MCF 10A (cell line): ENCODE measurements at regions of chr11 and their contacts with region 1.

Region 1: DNA sequence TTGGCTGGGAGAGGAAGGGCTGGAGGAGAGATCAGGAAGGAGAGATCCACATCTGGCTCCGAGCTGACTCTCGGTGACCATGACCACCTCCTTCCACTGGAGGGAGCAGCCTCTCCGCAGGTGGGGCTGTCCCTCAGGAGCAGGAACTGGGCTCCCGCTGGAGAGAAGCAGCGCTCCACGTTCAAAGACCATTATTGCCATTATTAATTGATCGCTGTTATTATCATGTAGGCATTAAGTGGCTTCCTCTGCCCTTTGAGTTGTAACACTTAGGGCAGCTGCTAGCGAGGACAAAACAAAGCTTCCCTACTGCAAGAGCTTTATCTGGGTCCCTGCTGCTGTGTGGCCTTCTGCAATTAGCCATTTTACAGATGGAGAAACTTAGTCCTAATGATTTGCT is 251.9 kb downstream of the ST3GAL4 start:
- DNase-seq: peak; percentile 65
- H3K4me3 Mint-ChIP-seq: peak overlapping the region; percentile 5
- H3K27ac Mint-ChIP-seq: no peak overlapping the region
- H3K4me1 Mint-ChIP-seq: peaks cover 5% of the 10 kb centered on the region
- H3K27me3 Mint-ChIP-seq: peaks cover 37% of the 10 kb centered on the region
- CTCF ChIP-seq: peak; percentile 93

Region 2: DNA sequence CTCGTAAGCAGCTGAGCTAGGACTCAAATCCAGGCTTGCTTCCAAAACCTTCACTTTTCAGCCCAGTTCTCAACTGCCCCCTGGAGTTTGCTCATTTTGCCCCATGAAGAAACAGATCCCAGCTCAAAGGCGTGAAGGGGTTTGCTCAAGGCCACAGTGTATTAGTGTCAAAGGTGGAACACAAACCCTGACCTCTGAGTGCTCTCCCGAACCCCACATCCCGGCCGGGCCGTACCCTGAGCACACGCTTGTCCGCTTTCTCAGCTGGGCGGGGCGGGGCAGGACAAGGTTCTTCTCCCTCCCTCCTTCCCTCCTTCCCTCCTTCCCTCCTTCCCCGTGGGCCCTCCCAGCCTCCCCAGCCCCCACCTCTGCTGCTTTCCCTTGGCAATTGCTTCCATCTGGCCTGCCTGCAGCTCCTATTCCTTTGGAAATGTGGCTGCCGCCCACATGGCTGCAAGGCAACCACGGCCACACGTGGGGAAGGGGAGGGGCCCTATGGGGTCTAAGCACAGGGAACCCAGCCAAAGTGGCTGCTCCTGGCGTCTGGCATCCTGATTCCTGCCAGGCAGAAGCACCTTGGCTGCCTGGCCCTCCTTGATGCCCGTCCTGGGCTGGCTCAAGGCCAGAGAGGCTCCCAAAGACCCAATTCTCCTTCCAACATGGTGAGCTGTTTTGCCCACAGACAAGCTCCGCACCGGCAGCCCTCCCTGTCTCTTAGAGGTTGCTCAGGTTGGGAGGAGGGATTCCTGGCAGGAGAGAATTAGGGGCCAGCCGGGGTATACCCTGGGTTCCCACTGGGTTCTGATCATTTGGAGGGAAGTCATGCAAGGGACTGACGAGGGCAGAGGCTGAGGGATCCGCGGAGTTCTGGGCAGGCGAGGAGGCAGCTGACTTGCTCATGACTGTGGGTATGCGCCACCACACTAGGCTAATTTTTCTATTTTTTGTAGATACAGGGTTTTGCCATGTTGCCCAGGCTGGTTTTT is 247.7 kb before region 1 on chr11:
- CTCF ChIA-PET with region 1: no interaction called
- POLR2A ChIA-PET with region 1: no interaction called
- intact Hi-C with region 1: no loop called
- DNase-seq: peak; percentile 43
- H3K4me3 Mint-ChIP-seq: no peak overlapping the region
- H3K27ac Mint-ChIP-seq: peak overlapping the region; percentile 51
- H3K4me1 Mint-ChIP-seq: peaks cover 21% of the 10 kb centered on the region
- H3K27me3 Mint-ChIP-seq: no peaks in the 10 kb centered on the region
- CTCF ChIP-seq: no peak

Region 3: DNA sequence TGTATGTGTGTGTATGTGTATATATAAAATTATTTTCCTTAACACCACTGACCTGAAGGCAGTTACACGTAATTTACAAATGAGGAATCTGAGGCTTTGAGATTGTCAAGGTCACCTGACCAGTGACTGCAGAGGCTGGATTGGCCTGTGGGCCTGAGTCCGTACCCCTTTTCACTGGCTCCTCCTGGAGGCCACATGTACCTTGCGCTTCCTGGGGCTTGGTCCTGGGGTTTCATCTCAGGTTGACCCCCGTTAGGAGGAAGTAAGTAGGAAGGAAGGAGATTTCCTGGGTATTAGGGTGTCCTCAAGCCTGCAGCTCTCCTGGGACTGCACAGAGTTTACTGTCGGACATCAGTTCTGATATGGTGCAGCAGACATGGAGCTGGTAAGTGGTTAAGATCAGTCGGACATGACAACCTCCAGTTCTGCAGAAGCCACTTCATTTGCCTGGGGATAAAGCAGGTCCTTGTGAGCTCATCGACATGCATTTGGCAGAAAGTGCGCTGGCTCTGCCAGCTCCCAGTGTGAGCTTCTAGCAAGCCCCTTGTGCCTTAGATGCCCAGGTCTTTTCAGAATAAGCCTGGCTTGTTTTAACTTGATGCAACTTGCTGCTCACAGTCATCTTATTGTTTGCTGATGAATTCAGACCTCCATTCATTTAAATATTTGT is 215.3 kb before region 1 on chr11:
- CTCF ChIA-PET with region 1: no interaction called
- POLR2A ChIA-PET with region 1: no interaction called
- intact Hi-C with region 1: no loop called
- DNase-seq: peak; percentile 35
- H3K4me3 Mint-ChIP-seq: no peak overlapping the region
- H3K27ac Mint-ChIP-seq: peak overlapping the region; percentile 83
- H3K4me1 Mint-ChIP-seq: peaks cover 30% of the 10 kb centered on the region
- H3K27me3 Mint-ChIP-seq: no peaks in the 10 kb centered on the region
- CTCF ChIP-seq: no peak

Region 4: GRCh38 chr11:126585781-126586491 is 21.4 kb before region 1 on chr11:
- CTCF ChIA-PET with region 1: interaction called, 44 read pairs
- POLR2A ChIA-PET with region 1: no interaction called
- intact Hi-C with region 1: no loop called
- DNase-seq: peak; percentile 97
- H3K4me3 Mint-ChIP-seq: no peak overlapping the region
- H3K27ac Mint-ChIP-seq: no peak overlapping the region
- H3K4me1 Mint-ChIP-seq: no peaks in the 10 kb centered on the region
- H3K27me3 Mint-ChIP-seq: no peaks in the 10 kb centered on the region
- CTCF ChIP-seq: no peak

Region 5: DNA sequence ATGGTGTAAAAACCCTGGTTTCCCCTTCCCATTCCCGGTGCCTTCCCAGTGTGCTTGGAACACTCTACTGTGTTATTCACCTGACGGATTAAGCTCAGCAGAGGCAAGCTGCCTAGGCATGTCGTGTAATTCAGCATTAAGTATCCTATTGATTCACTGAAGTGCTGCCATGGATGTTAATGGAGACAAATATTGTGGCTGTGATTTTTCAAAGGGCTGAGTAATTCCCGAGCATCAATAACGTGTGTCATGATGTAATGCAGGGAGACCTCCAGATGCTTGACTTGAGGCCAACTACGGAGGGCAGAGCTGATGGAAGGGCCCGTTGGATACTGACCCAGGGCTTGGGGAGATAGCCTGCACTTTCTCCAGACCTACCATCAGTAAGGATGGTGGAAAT is 17.1 kb after region 1 on chr11:
- CTCF ChIA-PET with region 1: interaction called, 10 read pairs
- POLR2A ChIA-PET with region 1: no interaction called
- intact Hi-C with region 1: no loop called
- DNase-seq: no peak
- H3K4me3 Mint-ChIP-seq: no peak overlapping the region
- H3K27ac Mint-ChIP-seq: no peak overlapping the region
- H3K4me1 Mint-ChIP-seq: no peaks in the 10 kb centered on the region
- H3K27me3 Mint-ChIP-seq: peaks cover 11% of the 10 kb centered on the region
- CTCF ChIP-seq: no peak

Region 6: DNA sequence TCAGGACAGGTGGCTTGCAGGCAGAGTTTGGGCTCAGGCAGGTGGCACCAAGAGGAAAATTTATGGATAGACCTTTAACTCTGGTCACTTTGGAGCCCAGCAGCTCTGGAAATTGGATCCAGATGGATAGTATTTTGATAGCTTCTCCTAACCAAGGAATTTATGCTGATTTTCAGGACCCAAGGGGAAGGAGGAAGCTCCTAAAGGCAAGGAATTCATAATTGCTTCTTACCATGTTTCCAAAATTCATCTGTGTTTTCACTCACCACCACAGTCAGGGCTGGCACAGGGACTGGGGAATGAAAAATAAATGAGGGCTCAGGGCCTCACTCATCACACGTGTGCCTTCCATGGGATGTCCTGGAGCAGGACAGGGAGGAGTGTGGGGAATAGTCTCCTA is 65.9 kb after region 1 on chr11:
- CTCF ChIA-PET with region 1: interaction called, 3 read pairs
- POLR2A ChIA-PET with region 1: no interaction called
- intact Hi-C with region 1: loop called (anchors 10 kb)
- DNase-seq: no peak
- H3K4me3 Mint-ChIP-seq: no peak overlapping the region
- H3K27ac Mint-ChIP-seq: no peak overlapping the region
- H3K4me1 Mint-ChIP-seq: no peaks in the 10 kb centered on the region
- H3K27me3 Mint-ChIP-seq: peaks cover 35% of the 10 kb centered on the region
- CTCF ChIP-seq: no peak

Region 7: GRCh38 chr11:126776119-126776518 is 168.7 kb after region 1 on chr11:
- CTCF ChIA-PET with region 1: no interaction called
- POLR2A ChIA-PET with region 1: no interaction called
- intact Hi-C with region 1: no loop called
- DNase-seq: no peak
- H3K4me3 Mint-ChIP-seq: no peak overlapping the region
- H3K27ac Mint-ChIP-seq: no peak overlapping the region
- H3K4me1 Mint-ChIP-seq: no peaks in the 10 kb centered on the region
- H3K27me3 Mint-ChIP-seq: no peaks in the 10 kb centered on the region
- CTCF ChIP-seq: no peak

Region 8: DNA sequence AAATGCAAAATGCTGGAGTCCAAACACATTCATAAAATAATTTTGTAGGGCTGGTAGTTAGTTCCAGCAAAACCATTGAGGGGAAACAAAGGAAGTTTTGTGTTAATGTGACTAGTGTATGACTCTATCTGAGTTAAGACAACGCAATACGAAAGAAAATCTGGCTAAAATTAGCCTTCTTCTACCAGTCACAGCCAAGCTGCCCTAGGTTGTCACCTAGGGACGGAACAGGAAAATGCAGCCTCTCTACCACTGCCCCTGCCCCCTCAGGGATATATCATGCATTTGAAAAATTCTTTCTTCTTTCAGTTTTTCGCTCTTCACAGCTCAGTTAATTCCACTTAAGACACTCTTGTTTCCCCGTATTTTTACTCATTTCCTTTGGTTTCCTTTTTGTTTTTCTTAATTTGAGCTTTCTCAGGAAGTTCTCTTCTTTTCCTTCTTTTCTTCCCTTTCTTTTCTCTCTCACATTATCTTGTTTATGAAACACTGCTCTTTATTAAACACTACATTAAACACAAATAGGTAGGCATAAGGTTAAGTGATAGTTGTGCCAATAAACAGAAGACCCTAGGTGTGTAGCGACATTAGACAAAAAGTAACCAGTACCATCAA is 362.6 kb after region 1 on chr11:
- CTCF ChIA-PET with region 1: interaction called, 13 read pairs
- POLR2A ChIA-PET with region 1: no interaction called
- intact Hi-C with region 1: loop called (anchors 1 kb)
- DNase-seq: peak; percentile 10
- H3K4me3 Mint-ChIP-seq: no peak overlapping the region
- H3K27ac Mint-ChIP-seq: no peak overlapping the region
- H3K4me1 Mint-ChIP-seq: no peaks in the 10 kb centered on the region
- H3K27me3 Mint-ChIP-seq: no peaks in the 10 kb centered on the region
- CTCF ChIP-seq: peak; percentile 14

Region 9: DNA sequence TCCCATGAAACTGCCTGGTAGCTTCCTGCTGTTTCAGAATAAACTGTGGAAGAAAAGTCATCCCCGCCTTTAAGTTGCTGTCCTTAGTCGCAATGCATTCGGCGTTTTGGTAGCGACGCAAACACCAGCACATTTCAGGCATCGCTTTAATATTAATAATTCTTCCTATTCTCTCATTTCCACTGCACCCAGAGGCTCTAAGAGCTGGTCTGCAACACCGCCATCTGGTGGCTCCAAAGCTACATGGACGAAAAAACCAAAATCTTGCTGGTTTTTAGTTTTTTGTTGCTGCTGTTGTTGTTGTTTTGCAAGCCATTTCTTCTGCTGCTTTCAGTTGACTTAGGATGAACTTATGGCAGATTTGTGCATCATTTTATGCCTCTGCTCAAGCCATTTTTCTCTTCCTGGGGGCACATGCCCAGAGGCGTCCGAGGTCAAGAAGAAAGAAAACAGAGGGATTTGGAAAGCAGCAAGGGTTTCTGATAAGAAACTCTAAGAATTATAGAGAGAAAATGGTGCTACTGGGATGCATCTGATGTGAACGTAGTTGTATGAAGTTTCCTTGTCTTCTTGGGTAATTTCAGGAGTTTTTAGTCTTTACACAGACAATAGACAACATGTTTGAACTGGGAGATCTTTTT is 738.6 kb after region 1 on chr11:
- CTCF ChIA-PET with region 1: interaction called, 15 read pairs
- POLR2A ChIA-PET with region 1: no interaction called
- intact Hi-C with region 1: no loop called
- DNase-seq: peak; percentile 58
- H3K4me3 Mint-ChIP-seq: no peak overlapping the region
- H3K27ac Mint-ChIP-seq: no peak overlapping the region
- H3K4me1 Mint-ChIP-seq: no peaks in the 10 kb centered on the region
- H3K27me3 Mint-ChIP-seq: no peaks in the 10 kb centered on the region
- CTCF ChIP-seq: peak; percentile 72